ENCODE measurements at regions of chr17 and their contacts with region 1.

Region 1: DNA sequence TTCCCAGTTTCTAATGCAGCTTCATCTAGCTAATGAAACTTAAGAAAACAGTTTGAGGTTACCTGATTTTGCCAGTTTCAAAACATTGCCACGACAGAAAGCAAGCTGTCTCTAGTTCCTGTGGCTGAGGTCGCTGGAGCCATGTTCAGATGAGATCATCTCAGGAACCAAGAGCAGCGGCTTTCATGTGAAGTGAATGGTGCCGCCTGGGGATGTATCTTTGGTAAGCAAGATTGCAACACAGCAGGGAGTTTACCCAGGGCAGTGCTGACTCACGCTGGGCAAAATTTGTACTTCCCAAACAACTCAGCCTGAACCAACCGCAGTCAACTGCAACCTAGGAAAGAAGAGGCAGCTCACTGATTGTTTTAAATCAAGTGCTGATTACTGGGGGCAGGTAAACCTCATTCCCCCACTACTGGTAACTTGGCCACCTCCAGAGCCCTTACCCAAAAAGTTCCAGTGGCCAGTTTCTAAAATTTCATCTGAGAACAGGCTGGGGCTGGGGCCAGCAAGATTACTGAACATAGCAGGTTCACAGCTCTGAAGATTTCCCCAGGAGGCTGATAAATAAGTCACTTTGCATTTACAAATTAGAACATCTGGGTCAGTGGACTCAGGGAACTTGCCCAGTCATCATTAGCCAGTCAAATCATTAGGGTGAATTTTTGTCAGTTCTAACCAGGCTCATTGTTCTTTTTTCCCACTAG is at the start of gene RFFL:
- DNase-seq: peak; percentile 88 to 97 (median 95)
- H3K4me3 ChIP-seq: peak within 1 kb of the TSS in 2 of 4 donors; percentile 26 to 37
- H3K27ac ChIP-seq: peak within 1 kb of the TSS; percentile 68 to 93 (median 90)
- H3K4me1 ChIP-seq: peaks cover 11 to 17% of the 10 kb centered on the region in 2 donors
- H3K27me3 ChIP-seq: no peaks in the 10 kb centered on the region
- CTCF ChIP-seq: peak in 4 of 6 experiments; percentile 9 to 41 (median 18)
- POLR2A ChIP-seq: peak; percentile 49 to 94
- total RNA-seq, gene RFFL: 5.3 to 24.4 (median 20.8) TPM

Region 2: DNA sequence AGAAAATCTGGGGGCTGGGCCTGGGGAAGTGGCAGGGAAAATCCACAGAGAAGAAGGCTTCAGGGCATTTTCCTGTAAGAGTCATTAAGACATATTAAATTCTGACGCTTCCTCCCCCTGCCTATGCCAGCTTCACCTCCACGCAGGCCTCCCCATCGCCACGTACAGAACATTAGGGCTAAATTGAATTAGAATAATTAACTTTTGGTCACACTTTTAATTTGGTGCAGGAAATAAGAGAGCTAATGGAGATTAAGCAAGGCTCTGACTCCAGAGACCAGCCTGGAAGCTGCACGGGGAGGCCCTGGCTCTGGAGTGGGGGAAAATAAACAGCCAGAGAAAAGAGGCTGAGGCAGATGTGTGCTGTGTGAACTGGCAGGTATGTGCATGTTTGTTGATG is 250.4 kb before region 1 on chr17:
- intact Hi-C with region 1: no loop called
- DNase-seq: no peak
- H3K4me3 ChIP-seq: no peak overlapping the region
- H3K27ac ChIP-seq: no peak overlapping the region
- H3K4me1 ChIP-seq: no peaks in the 10 kb centered on the region
- H3K27me3 ChIP-seq: no peaks in the 10 kb centered on the region
- CTCF ChIP-seq: no peak
- POLR2A ChIP-seq: no peak

Region 3: DNA sequence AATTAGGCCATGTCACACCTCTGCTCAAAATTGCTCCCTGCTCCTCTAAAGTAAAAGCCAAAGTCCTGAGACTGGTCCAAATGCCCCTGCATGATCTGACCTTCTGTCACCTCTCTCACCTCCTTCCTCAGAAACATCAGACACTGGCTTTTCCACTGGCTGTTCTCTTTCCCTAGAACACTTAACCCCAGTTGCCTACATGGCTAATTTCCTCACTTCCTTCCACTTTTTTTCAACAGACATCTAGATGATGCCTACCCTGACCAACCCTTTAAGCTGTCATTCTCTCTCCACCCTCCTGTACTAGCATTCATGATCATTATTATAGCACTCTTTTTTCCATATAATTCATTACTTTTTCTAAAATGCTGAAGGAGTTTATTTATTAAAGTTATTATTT is 133.4 kb before region 1 on chr17:
- intact Hi-C with region 1: no loop called
- DNase-seq: no peak
- H3K4me3 ChIP-seq: no peak overlapping the region
- H3K27ac ChIP-seq: no peak overlapping the region
- H3K4me1 ChIP-seq: no peaks in the 10 kb centered on the region
- H3K27me3 ChIP-seq: no peaks in the 10 kb centered on the region
- CTCF ChIP-seq: no peak
- POLR2A ChIP-seq: no peak

Region 4: GRCh38 chr17:34980681-34981537 is 82.8 kb before region 1 on chr17:
- intact Hi-C with region 1: loop called in 1 of 2 experiments (anchors 10 kb)
- DNase-seq: peak; percentile 72 to 87 (median 78)
- H3K4me3 ChIP-seq: peak overlapping the region in 3 of 4 donors; percentile 76 to 86 (median 81)
- H3K27ac ChIP-seq: peak overlapping the region; percentile 86 to 99 (median 99)
- H3K4me1 ChIP-seq: peaks cover 18% of the 10 kb centered on the region in 2 donors
- H3K27me3 ChIP-seq: no peaks in the 10 kb centered on the region
- CTCF ChIP-seq: peak in 5 of 6 experiments; percentile 37 to 65 (median 48)
- POLR2A ChIP-seq: peak in 1 of 2 donors; percentile 60

Measured in adrenal gland (tissue), 19 donors.